Posterior cingulate gyrus (tissue), 11 donors: ENCODE measurements at regions of chr1 and their contacts with region 1.

Region 1: DNA sequence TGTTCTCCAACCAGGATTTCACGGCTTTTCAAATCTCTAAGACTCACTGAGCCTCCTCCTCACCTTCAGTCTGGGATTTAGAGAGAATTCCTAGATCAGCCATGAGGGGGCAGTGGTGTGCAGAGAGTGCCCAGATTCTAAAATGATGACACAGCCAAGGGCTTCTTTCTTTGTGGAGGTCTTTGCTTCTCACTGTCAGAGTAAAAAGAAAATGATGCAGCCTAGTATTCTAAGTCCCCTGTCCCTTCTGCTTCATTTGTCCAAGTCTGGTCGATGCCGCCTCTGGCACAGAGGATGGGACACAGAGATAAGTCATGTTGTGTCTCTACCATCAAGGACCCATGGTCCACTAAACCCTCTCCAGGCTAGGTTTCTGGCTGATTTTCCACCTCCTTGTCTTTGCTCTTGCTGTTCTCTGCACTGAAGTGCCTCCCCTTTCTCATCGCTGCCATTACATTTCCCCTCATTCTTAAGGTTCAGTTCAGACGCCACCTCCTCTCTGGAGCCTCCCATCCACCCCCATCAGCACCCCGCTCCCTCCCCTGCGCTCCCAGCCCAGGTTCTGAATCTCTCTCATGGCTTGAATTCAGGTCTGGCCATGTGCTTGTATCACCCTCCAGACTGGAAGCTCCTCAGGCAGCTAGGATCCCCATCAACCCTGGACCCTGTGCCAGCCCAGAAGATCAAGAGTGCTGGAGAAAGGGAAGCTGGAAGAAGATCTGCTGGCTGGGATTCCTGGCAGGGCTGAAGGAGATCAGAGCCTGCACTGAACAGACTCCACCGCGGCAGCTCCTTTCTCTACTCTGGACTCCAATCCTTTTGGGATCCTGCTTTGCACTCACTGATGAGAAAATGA is 12.0 kb upstream of the TINAGL1 start:
- DNase-seq: peak in 6 of 10 donors; percentile 39 to 84 (median 62)

Region 2: DNA sequence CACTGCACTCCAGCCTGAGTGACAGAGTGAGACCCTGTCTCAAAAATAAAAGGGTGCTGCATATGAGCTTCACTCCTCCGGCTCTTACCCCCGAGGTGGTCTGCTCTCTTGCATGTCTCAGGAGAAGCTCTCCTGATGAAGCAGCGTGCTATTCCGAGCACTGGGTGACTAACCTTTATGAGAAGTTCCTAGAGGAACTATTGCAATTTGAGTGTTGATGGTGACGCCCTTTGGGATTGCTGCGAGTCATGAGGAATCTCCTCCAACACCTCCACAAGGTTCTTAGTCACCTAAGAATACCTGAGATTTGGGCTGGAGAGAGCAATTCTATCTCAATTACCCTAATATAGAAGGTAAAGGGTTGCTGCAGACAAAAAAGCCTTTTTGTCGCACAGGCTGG is 28.8 kb before region 1 on chr1:
- intact Hi-C with region 1: no loop called
- DNase-seq: no peak

Region 3: GRCh38 chr1:31593770-31594632 is 29.6 kb after region 1 on chr1:
- intact Hi-C with region 1: loop called (anchors 2 kb)
- DNase-seq: peak in 6 of 10 donors; percentile 26 to 88 (median 54)

Region 4: DNA sequence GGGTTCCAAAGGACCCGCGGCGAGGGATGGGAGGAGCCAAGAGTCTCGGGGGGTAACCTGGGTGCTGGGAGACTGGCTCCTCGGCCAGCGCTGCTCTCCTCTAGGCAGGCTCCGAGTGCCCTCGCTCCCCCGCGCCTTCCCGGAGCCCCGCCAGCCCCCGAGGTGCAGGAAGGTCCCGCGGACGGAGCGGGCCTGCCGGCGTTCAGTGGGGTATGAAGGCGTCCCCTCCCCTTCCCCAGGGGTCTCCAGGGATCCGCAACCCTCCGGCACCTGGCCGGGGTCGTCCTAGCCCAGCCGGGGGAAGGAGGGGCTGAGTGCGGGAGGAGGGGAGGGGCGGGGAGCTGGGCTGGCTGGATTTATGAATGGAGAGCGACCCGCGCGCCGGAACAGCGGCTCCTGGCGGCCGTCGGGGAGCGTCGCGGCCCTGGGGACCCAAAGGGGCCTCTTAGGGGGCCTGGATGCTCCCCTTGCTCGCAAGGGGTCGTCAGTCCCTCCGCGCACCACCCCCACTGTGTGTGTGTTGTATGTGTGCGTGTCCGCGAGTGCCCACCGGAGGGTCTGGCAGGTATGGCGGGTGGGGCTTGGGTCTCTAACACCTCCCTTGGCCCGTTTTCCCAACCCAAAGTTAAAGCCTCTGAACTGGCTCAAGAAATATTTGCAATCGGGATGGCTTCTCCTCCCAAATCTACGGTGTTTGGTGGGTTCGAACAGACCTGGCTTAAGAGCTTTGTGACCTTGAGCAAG is 53.7 kb after region 1 on chr1:
- intact Hi-C with region 1: loop called (anchors 1 kb)
- DNase-seq: peak in 1 of 10 donors; percentile 77

Region 5: GRCh38 chr1:31723828-31724359 is 159.5 kb after region 1 on chr1:
- intact Hi-C with region 1: no loop called
- DNase-seq: peak; percentile 53 to 95 (median 70)